ENCODE measurements at regions of chr3 and their contacts with region 1.

Region 1: GRCh38 chr3:61858056-61858455 is 296.7 kb downstream of the PTPRG start:
- DNase-seq: no peak
- H3K4me3 ChIP-seq: no peak overlapping the region
- H3K27ac ChIP-seq: no peak overlapping the region
- H3K4me1 ChIP-seq: 0 out of 2 replicates have a peak, but pooled peaks cover under 1% of the 10 kb centered on the region
- H3K27me3 ChIP-seq: no peaks in the 10 kb centered on the region
- CTCF ChIP-seq: peak; percentile 49

Region 2: GRCh38 chr3:61875046-61875844 is 17.2 kb after region 1 on chr3:
- CTCF ChIA-PET with region 1: no interaction called
- POLR2A ChIA-PET with region 1: no interaction called
- intact Hi-C with region 1: no loop called
- DNase-seq: no peak
- H3K4me3 ChIP-seq: no peak overlapping the region
- H3K27ac ChIP-seq: no peak overlapping the region
- H3K4me1 ChIP-seq: no peaks in the 10 kb centered on the region
- H3K27me3 ChIP-seq: no peaks in the 10 kb centered on the region
- CTCF ChIP-seq: no peak

Region 3: DNA sequence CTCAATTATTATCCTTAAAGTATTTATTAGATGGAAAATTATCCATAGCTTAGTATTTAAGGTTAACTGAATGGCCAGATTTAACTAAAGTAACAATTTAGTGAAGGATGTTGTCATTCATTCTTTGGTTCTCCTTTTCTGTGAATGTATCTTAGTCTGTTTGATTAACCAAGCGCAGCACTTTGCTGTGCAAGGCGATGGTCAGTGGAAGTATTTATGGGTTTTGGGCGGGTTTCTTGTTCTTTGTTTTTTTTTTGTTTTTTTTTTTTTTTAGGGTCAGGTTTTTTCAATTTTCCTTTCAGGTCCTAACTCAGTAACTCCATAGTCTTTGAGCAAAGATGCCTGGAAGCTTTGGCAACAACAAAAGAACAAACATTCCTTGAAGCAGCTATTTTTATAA is 32.1 kb after region 1 on chr3:
- CTCF ChIA-PET with region 1: no interaction called
- POLR2A ChIA-PET with region 1: no interaction called
- intact Hi-C with region 1: no loop called
- DNase-seq: no peak
- H3K4me3 ChIP-seq: no peak overlapping the region
- H3K27ac ChIP-seq: no peak overlapping the region
- H3K4me1 ChIP-seq: peaks cover 8% of the 10 kb centered on the region
- H3K27me3 ChIP-seq: no peaks in the 10 kb centered on the region
- CTCF ChIP-seq: no peak

Region 4: GRCh38 chr3:61956236-61956635 is 98.2 kb after region 1 on chr3:
- CTCF ChIA-PET with region 1: no interaction called
- POLR2A ChIA-PET with region 1: no interaction called
- intact Hi-C with region 1: loop called (anchors 5 kb)
- DNase-seq: no peak
- H3K4me3 ChIP-seq: no peak overlapping the region
- H3K27ac ChIP-seq: no peak overlapping the region
- H3K4me1 ChIP-seq: peaks cover 7% of the 10 kb centered on the region; the same call in 1 of the 2 replicates
- H3K27me3 ChIP-seq: no peaks in the 10 kb centered on the region
- CTCF ChIP-seq: no peak

Region 5: GRCh38 chr3:62084597-62084996 is 226.5 kb after region 1 on chr3:
- CTCF ChIA-PET with region 1: no interaction called
- POLR2A ChIA-PET with region 1: no interaction called
- intact Hi-C with region 1: no loop called
- DNase-seq: peak; percentile 37 to 72
- H3K4me3 ChIP-seq: no peak overlapping the region
- H3K27ac ChIP-seq: peak overlapping the region; percentile 42
- H3K4me1 ChIP-seq: peaks cover 17% of the 10 kb centered on the region
- H3K27me3 ChIP-seq: no peaks in the 10 kb centered on the region
- CTCF ChIP-seq: no peak

Region 6: GRCh38 chr3:62188681-62189383 is 330.8 kb after region 1 on chr3:
- CTCF ChIA-PET with region 1: no interaction called
- POLR2A ChIA-PET with region 1: no interaction called
- intact Hi-C with region 1: loop called (anchors 5 kb)
- DNase-seq: peak in 1 of 2 experiments; percentile 60
- H3K4me3 ChIP-seq: no peak overlapping the region
- H3K27ac ChIP-seq: no peak overlapping the region
- H3K4me1 ChIP-seq: no peaks in the 10 kb centered on the region
- H3K27me3 ChIP-seq: no peaks in the 10 kb centered on the region
- CTCF ChIP-seq: peak; percentile 74

Measured in PC-9 (cell line).